ENCODE measurements at regions of chr6 and their contacts with region 1.

Region 1: GRCh38 chr6:75611702-75612375 is 10.2 kb downstream of the SENP6 start:
- DNase-seq: no peak
- H3K4me3 ChIP-seq: peak overlapping the region in 1 of 8 donors; percentile 15
- H3K27ac ChIP-seq: peak overlapping the region; percentile 2 to 81 (median 50)
- H3K4me1 ChIP-seq: peaks cover 66 to 100% (median 95%) of the 10 kb centered on the region in 6 donors
- H3K27me3 ChIP-seq: no peaks in the 10 kb centered on the region
- CTCF ChIP-seq: no peak
- POLR2A ChIP-seq: no peak

Region 2: DNA sequence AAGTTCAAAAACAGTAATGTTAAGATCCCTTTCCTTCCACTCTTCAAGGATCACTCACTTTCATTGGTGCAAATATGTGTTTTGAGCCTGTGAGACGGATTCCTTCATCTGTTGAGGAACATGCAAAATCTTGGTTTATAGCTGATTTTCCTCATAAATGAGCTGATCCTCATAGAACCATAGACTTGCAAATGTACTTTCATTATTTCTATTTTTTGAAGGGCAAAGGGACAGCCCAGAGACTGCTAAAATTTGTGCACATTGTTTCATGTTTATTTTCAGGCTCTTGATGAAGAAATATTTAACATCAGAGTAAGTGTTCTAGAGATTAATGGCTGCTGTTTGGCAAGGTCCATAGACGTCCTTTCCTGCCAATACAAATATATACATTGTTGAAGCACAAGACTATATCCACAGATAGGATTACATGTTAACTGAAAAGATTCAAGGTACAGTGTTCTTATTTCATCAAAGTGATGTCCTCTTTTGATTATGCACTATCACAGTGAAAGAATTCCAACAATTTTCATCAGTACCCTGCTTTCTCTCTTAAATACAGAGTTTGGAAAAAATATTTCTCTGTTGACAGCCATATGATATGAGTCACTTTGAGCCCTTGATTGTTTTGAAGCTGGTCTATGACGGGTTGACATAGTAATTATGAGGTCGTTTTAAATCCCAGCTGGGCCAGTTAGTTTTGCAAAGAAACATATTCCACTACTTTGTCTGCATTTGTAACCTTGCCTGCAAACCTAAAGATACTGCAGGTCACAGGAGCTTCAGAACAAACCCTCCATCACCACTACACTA is 214.0 kb before region 1 on chr6:
- intact Hi-C with region 1: no loop called
- DNase-seq: no peak
- H3K4me3 ChIP-seq: no peak overlapping the region
- H3K27ac ChIP-seq: no peak overlapping the region
- H3K4me1 ChIP-seq: no peaks in the 10 kb centered on the region
- H3K27me3 ChIP-seq: no peaks in the 10 kb centered on the region
- CTCF ChIP-seq: no peak
- POLR2A ChIP-seq: no peak

Region 3: GRCh38 chr6:75449716-75450115 is 162.1 kb before region 1 on chr6:
- intact Hi-C with region 1: no loop called
- DNase-seq: no peak
- H3K4me3 ChIP-seq: no peak overlapping the region
- H3K27ac ChIP-seq: no peak overlapping the region
- H3K4me1 ChIP-seq: no peaks in the 10 kb centered on the region
- H3K27me3 ChIP-seq: no peaks in the 10 kb centered on the region
- CTCF ChIP-seq: no peak
- POLR2A ChIP-seq: no peak

Region 4: GRCh38 chr6:75467966-75468365 is 143.9 kb before region 1 on chr6:
- intact Hi-C with region 1: no loop called
- DNase-seq: no peak
- H3K4me3 ChIP-seq: no peak overlapping the region
- H3K27ac ChIP-seq: no peak overlapping the region
- H3K4me1 ChIP-seq: no peaks in the 10 kb centered on the region
- H3K27me3 ChIP-seq: peaks cover 0 to 2% (median 0%) of the 10 kb centered on the region in 7 donors
- CTCF ChIP-seq: no peak
- POLR2A ChIP-seq: no peak

Region 5: DNA sequence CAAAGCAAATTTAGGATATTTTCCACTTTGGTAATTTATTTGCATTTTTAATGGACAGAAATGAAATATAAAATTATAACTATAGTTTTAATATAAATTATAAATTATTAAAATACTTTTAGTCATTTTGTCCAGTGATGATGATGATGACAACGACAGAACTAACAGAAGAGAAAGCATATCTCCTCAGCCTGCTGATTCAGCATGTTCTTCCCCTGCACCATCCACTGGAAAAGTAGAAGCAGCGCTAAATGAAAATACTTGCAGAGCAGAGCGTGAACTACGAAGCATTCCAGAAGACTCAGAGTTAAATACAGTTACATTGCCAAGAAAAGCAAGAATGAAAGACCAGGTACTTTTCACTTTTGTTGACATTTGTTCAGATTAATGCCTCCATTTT is 54.8 kb after region 1 on chr6:
- intact Hi-C with region 1: loop called (anchors 10 kb)
- DNase-seq: no peak
- H3K4me3 ChIP-seq: no peak overlapping the region
- H3K27ac ChIP-seq: no peak overlapping the region
- H3K4me1 ChIP-seq: no peaks in the 10 kb centered on the region
- H3K27me3 ChIP-seq: no peaks in the 10 kb centered on the region
- CTCF ChIP-seq: no peak
- POLR2A ChIP-seq: no peak